Body of pancreas (tissue), 4 donors: ENCODE measurements at regions of chr15 and their contacts with region 1.

Region 1: DNA sequence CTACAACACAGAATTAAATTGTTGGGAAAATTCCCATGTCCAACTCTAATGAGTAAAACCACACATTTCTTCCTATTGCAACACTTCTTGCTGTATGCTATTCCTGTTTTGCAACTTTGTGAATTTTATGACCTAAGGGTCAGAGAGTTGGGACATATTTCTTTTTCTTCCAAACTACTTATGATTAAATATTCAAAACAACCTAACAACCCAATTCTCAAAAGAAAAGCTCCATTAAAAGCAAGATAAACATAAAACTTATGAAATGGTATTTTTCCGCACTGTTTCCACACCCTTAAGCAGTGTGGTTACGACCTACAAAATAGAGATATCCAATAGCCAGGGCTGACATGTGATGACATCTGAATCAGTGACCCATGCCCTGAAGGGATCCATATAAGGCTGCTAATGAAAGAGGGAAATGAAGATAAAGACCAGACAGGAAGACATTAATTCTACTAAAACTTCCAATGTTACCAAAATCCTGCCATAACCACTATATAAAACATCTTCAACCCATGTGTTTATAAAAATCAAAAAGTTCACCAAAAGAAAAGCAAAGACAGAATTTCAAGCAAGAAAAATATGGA is 45.6 kb downstream of the DMXL2 start:
- DNase-seq: peak in 1 of 4 donors; percentile 27
- ATAC-seq: peak; percentile 56
- H3K4me3 ChIP-seq: no peak overlapping the region
- H3K27ac ChIP-seq: peak overlapping the region in 1 of 4 donors; percentile 1
- H3K4me1 ChIP-seq: no peaks in the 10 kb centered on the region
- H3K27me3 ChIP-seq: no peaks in the 10 kb centered on the region
- CTCF ChIP-seq: no peak
- POLR2A ChIP-seq: no peak

Region 2: GRCh38 chr15:50298340-50298739 is 1278.7 kb before region 1 on chr15:
- intact Hi-C with region 1: no loop called
- DNase-seq: no peak
- ATAC-seq: no peak
- H3K4me3 ChIP-seq: no peak overlapping the region
- H3K27ac ChIP-seq: no peak overlapping the region
- H3K4me1 ChIP-seq: no peaks in the 10 kb centered on the region
- H3K27me3 ChIP-seq: no peaks in the 10 kb centered on the region
- CTCF ChIP-seq: no peak
- POLR2A ChIP-seq: no peak

Region 3: DNA sequence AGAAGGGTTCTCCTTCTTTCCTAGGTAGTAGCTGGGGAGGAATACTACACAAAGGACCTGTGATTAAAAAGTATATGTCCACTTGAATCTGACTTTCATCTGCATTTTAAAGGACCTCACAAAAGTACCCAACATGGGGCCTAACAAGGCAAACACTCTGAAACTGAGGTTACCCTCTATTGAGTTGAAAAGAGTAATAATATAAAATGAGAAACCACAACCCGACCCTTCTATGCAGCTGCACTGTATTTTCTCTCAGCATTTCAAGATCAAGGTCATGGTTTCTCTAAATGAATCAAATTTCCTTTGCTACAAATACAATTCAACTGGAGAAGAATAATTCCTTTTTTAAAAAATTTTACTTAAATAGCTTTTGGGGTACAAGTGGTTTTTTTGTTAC is 60.7 kb before region 1 on chr15:
- intact Hi-C with region 1: loop called (anchors 10 kb)
- DNase-seq: no peak
- ATAC-seq: no peak
- H3K4me3 ChIP-seq: no peak overlapping the region
- H3K27ac ChIP-seq: no peak overlapping the region
- H3K4me1 ChIP-seq: no peaks in the 10 kb centered on the region
- H3K27me3 ChIP-seq: no peaks in the 10 kb centered on the region
- CTCF ChIP-seq: no peak
- POLR2A ChIP-seq: no peak